Activated naive CD4-positive, alpha-beta T cell treated with anti-CD3 and anti-CD28 coated beads for 36 hours (primary cell): ENCODE measurements at regions of chr1 and their contacts with region 1.

Region 1: GRCh38 chr1:65687428-65688214 is 105.1 kb upstream of the PDE4B start:
- DNase-seq: peak; percentile 88
- H3K4me3 Mint-ChIP-seq: no peak overlapping the region
- H3K27ac Mint-ChIP-seq: no peak overlapping the region
- H3K4me1 Mint-ChIP-seq: peaks cover 6% of the 10 kb centered on the region
- H3K27me3 Mint-ChIP-seq: peaks cover 9% of the 10 kb centered on the region

Region 2: GRCh38 chr1:64686828-64687724 is 1000.5 kb before region 1 on chr1:
- CTCF ChIA-PET with region 1: no interaction called
- intact Hi-C with region 1: loop called (anchors 2 kb)
- DNase-seq: peak; percentile 39
- H3K4me3 Mint-ChIP-seq: no peak overlapping the region
- H3K27ac Mint-ChIP-seq: no peak overlapping the region
- H3K4me1 Mint-ChIP-seq: peaks cover 5% of the 10 kb centered on the region
- H3K27me3 Mint-ChIP-seq: no peaks in the 10 kb centered on the region

Region 3: DNA sequence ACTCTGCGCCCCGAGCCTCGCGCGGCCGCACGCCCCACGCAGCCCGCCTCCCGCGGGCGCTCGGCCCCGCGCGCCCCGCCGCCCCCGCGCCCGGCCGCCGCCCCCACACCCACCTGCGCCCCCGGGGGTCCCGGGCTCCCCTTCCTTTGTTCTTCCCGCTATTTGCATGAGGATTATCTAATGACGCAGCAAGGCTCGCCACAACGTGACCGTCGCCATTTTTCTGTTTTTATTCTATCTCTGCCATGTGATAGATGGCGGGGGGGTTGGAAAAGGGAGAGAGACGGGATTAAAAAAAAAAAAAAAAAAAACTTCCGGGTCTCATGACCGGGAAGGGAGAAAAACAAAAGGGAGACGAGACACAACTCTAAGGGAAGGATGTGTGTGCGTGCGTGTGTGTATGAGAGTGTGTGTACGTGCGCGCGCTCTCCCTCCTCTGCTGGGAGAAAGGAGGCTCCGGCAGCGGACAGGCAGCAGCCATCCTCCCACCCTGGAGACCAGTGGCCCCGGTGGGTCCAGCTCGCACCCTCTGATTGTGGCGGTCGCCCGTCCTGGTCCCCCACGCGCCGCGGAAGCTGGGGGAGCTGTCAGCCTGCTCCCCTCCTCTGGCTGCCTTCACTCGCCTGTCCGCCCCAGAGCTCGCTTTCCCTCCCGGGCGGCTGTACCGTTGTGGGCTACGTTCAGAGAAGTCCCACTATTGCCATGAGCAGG is 620.0 kb before region 1 on chr1:
- CTCF ChIA-PET with region 1: interaction called, 10 read pairs
- intact Hi-C with region 1: loop called (anchors 1 kb)
- DNase-seq: peak; percentile 71
- H3K4me3 Mint-ChIP-seq: peak overlapping the region; percentile 87
- H3K27ac Mint-ChIP-seq: peak overlapping the region; percentile 95
- H3K4me1 Mint-ChIP-seq: peaks cover 51% of the 10 kb centered on the region
- H3K27me3 Mint-ChIP-seq: no peaks in the 10 kb centered on the region

Region 4: GRCh38 chr1:65214340-65215027 is 473.1 kb before region 1 on chr1:
- CTCF ChIA-PET with region 1: interaction called, 9 read pairs
- intact Hi-C with region 1: loop called (anchors 1 kb)
- DNase-seq: no peak
- H3K4me3 Mint-ChIP-seq: no peak overlapping the region
- H3K27ac Mint-ChIP-seq: no peak overlapping the region
- H3K4me1 Mint-ChIP-seq: peaks cover 41% of the 10 kb centered on the region
- H3K27me3 Mint-ChIP-seq: no peaks in the 10 kb centered on the region

Region 5: DNA sequence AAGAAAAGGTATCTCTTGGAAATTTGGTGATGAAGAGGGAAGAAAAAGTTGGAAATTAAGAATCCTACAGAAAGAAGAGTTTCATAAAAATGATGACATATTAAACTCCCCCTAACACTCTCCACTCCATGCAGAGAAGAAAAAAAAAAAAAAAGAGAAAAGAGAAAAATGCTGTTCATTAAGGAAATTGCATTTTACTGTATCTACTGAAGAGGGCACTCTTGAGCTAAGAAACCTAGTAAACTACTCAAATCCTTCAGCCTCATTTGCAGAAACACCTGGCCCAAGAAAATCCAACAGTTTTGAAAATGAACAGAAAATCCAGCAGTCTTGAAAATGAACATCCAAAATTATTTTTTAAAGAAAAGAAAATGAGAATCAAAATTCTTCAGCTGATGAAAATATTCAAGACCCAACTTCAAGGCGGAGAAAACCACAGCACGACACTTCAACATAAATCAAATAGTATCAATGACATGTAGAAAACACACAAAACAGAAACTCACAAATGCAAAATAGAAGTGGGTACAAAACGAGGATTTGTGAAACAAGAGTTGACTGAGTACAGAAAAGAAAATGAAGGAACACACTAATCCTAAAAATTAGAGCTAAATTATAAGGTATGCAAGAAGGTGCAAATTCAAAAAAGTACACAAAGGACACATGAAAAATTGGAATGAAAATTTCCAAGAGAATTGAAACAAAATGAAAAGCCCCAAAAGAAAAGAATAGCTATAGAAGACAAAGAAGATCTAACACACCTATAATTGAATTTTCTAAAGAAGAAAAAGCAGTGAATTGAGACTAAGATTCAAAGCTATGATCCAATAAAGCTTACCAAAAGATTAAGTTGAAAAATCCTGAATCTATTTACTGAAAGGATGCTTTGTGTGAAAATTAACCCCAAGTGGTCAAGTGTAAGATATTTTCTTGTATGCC is 451.5 kb before region 1 on chr1:
- CTCF ChIA-PET with region 1: interaction called, 45 read pairs
- intact Hi-C with region 1: loop called (anchors 1 kb)
- DNase-seq: no peak
- H3K4me3 Mint-ChIP-seq: no peak overlapping the region
- H3K27ac Mint-ChIP-seq: no peak overlapping the region
- H3K4me1 Mint-ChIP-seq: peaks cover 7% of the 10 kb centered on the region
- H3K27me3 Mint-ChIP-seq: peaks cover 3% of the 10 kb centered on the region